Right ventricle myocardium superior (tissue), 1 donor: ENCODE measurements at regions of chr2 and their contacts with region 1.

Region 1: DNA sequence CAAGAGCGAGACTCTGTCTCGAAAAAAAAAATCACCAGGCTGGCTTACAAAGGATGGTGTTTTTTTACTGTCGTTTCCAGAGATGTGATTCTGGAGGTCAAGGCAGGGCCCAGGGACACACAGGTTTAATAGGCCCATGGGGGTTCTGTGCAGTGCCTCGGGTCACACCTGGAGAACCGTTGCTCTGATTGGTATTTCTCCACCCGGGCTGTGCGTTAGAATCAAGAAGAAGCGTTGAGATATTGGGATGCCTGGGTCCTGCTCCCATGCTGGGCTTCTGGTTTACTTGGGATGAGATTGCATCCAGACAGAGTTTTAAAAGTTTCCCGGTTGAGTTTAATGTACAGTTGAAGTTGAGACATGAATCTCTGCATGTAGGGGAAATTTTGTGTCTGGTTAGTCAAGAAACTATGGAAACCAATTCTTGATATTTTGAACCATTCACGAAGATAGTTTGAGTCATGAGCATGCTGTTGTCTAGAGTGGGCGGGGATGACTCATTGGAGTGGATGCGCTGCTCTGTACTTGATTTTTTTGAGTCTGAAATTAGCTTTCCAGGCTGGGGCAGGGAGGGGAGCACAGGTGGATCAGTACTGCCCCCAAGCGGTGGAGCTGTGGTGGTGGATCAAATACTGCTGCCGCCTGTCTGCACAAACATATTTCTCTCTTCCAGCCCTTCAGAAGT is 50.1 kb downstream of the GREB1 start:
- DNase-seq: peak; percentile 71
- ATAC-seq: peak; percentile 74

Region 2: DNA sequence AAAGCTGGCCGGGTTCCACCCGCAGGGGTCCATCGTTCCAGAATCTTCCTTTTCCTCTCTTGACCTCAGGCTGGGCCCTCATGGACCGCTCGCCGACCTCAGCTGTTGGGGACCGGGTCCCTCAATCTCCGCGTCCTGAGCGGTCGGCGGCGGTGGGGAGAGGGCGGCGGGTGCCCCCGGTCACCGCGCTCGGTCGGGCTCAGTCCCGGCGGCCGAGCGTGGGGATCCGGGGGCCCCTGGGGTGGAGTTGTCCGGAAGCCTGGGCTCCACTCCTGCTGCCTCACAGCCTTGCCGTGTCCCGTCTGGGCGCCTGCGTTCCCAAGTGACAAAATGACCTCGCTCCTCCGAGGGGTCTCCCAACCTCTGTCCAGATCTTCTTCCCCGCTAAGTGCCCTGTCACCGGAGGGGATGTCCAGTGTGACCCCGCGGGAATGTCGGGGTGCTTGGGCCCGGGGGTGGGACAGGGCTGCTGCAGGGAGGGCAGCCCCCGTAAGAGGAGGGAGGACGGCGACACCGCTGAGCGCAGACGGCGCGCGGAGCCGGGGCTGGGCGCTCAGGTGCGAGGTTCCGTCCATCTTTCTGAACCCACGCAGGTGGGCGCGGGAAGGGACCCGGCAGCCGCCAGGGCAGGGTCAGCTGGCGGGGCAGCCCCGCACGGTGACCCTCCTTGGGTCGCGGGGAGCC is 102.1 kb before region 1 on chr2:
- intact Hi-C with region 1: loop called (anchors 2 kb)
- DNase-seq: no peak
- ATAC-seq: peak; percentile 6